Posterior vena cava (tissue), 2 donors: ENCODE measurements at regions of chr11 and their contacts with region 1.

Region 1: DNA sequence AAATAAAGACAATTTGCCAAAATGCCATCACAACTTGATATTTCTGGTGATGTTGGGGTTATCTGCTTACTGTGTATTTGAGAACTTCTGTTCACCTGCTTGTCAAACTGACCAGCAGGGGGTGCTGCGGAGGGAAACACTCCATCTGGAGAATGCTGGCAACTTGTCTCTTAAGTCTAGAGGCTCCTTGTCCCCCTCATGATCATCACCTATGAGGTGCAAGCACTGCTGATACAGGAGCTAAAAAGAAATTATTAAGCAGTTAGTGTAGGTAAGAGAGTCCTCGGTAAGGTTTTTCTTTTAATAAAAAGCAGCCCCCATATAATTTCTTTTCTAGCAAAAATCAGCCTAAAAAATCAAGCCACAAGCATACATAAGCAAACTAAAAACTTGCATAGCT is 32.7 kb upstream of the GLYATL1B start:
- DNase-seq: peak; percentile 90

Region 2: GRCh38 chr11:59135648-59136461 is 82.5 kb after region 1 on chr11:
- intact Hi-C with region 1: loop called in 1 of 2 experiments (anchors 10 kb)
- DNase-seq: peak; percentile 95